Activated CD4-positive, alpha-beta T cell treated with anti-CD3 and anti-CD28 coated beads for 36 hours (primary cell): ENCODE measurements at regions of chr14 and their contacts with region 1.

Region 1: GRCh38 chr14:34211732-34212131 is 250.3 kb downstream of the SPTSSA start:
- DNase-seq: peak; percentile 16
- ATAC-seq: peak; percentile 81
- H3K4me3 Mint-ChIP-seq: peak overlapping the region; percentile 19
- H3K27ac Mint-ChIP-seq: peak overlapping the region; percentile 45
- H3K4me1 Mint-ChIP-seq: peaks cover 19% of the 10 kb centered on the region
- H3K27me3 Mint-ChIP-seq: peaks cover 26% of the 10 kb centered on the region

Region 2: GRCh38 chr14:34119107-34119858 is 92.4 kb before region 1 on chr14:
- CTCF ChIA-PET with region 1: no interaction called
- POLR2A ChIA-PET with region 1: interaction called, 3 read pairs
- intact Hi-C with region 1: loop called in 1 of 2 experiments (anchors 5 kb)
- DNase-seq: peak; percentile 11
- ATAC-seq: peak; percentile 91
- H3K4me3 Mint-ChIP-seq: no peak overlapping the region
- H3K27ac Mint-ChIP-seq: no peak overlapping the region
- H3K4me1 Mint-ChIP-seq: peaks cover 12% of the 10 kb centered on the region
- H3K27me3 Mint-ChIP-seq: peaks cover 9% of the 10 kb centered on the region

Region 3: DNA sequence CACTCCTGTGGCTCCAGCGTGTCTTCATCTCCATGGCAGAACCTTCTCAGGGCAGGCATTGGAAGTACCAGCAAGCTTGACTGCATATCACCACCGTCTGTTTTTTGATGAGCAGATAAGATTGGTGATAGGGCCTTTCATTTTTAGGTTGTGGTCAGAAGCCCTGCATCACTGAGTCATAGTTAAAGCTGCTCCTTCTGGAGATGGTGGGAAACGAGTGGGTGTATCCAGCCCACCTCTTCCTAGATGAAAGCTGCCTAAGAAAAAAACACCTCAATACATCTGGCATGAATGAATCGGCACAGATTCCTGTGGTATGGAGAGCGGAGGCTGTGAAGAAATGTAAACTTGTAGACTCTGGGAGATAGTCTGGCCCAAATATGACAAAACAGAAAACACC is 12.2 kb before region 1 on chr14:
- CTCF ChIA-PET with region 1: no interaction called
- POLR2A ChIA-PET with region 1: no interaction called
- intact Hi-C with region 1: loop called (anchors 1 kb)
- DNase-seq: peak; percentile 48
- ATAC-seq: peak; percentile 76
- H3K4me3 Mint-ChIP-seq: no peak overlapping the region
- H3K27ac Mint-ChIP-seq: no peak overlapping the region
- H3K4me1 Mint-ChIP-seq: peaks cover 37% of the 10 kb centered on the region
- H3K27me3 Mint-ChIP-seq: peaks cover 10% of the 10 kb centered on the region